ENCODE measurements at regions of chr9 and their contacts with region 1.

Region 1: DNA sequence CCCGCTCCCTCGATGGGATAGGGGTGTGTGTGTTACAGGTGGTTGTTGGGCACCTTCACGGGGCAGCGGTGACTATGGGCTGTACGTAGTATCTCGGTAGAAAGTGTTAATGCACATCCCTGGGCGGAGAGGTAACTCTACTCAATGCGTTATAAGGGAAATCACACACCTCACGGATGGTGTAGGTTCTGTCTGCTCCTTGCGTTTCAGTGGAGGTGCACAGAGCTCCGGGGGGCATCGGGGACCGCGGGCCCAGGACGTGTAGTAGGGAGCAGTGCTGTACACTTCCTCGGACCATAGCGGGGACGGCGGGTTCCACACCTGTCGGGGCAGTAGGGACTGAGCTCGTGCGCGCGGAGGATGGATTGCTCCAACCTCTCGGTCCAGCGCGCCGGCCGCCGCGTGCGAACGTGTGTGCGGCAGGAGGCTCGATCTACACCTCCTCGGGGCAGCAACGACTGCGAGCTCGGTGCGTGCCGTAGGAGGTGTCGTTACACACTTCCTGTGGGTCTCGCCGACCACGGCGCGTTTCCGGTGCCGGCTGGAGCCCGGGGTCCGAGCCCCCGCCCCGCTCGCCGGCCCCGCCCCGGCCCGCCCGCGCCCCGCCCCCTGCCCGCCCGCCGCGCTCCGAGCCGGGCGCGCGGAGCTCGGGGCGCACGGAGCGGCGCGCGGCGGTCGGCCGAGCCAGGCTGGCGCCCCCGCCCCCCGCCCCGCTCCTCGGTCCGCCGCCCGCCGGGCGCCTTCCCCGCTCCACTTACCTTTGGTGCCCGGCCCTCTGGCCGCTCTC is at the start of gene KIAA1958:
- DNase-seq: peak; percentile 94
- ATAC-seq: peak; percentile 96
- H3K4me3 Mint-ChIP-seq: peak within 1 kb of the TSS; percentile 95
- H3K27ac Mint-ChIP-seq: peak within 1 kb of the TSS; percentile 95
- H3K4me1 Mint-ChIP-seq: peaks cover 37% of the 10 kb centered on the region
- H3K27me3 Mint-ChIP-seq: no peaks in the 10 kb centered on the region
- total RNA-seq, gene KIAA1958: 9.7 to 13.0 TPM

Region 2: GRCh38 chr9:111631071-111631971 is 855.1 kb before region 1 on chr9 and contains the start of gene DNAJC25:
- CTCF ChIA-PET with region 1: no interaction called
- POLR2A ChIA-PET with region 1: no interaction called
- intact Hi-C with region 1: loop called in 1 of 2 experiments (anchors 5 kb)
- DNase-seq: peak; percentile 98
- ATAC-seq: peak; percentile 98
- H3K4me3 Mint-ChIP-seq: peak within 1 kb of the TSS; percentile 94
- H3K27ac Mint-ChIP-seq: peak within 1 kb of the TSS; percentile 91
- H3K4me1 Mint-ChIP-seq: peaks cover 47% of the 10 kb centered on the region
- H3K27me3 Mint-ChIP-seq: no peaks in the 10 kb centered on the region
- total RNA-seq, gene DNAJC25: 6.3 to 7.5 TPM

Region 3: GRCh38 chr9:112174218-112174964 is 312.0 kb before region 1 on chr9:
- CTCF ChIA-PET with region 1: no interaction called
- POLR2A ChIA-PET with region 1: interaction called, 3 read pairs
- intact Hi-C with region 1: loop called in 1 of 2 experiments (anchors 5 kb)
- DNase-seq: peak; percentile 87
- ATAC-seq: peak; percentile 87
- H3K4me3 Mint-ChIP-seq: peak overlapping the region; percentile 75
- H3K27ac Mint-ChIP-seq: peak overlapping the region; percentile 92
- H3K4me1 Mint-ChIP-seq: peaks cover 38% of the 10 kb centered on the region
- H3K27me3 Mint-ChIP-seq: peaks cover 11% of the 10 kb centered on the region

Region 4: GRCh38 chr9:112717661-112718341 is 231.4 kb after region 1 on chr9 and contains the start of gene INIP:
- CTCF ChIA-PET with region 1: interaction called, 3 read pairs
- POLR2A ChIA-PET with region 1: interaction called, 4 read pairs
- intact Hi-C with region 1: loop called (anchors 1 kb)
- DNase-seq: peak; percentile 99
- ATAC-seq: peak; percentile 93
- H3K4me3 Mint-ChIP-seq: peak within 1 kb of the TSS; percentile 89
- H3K27ac Mint-ChIP-seq: peak within 1 kb of the TSS; percentile 97
- H3K4me1 Mint-ChIP-seq: peaks cover 35% of the 10 kb centered on the region
- H3K27me3 Mint-ChIP-seq: no peaks in the 10 kb centered on the region
- total RNA-seq, gene INIP: 37.3 to 37.7 TPM

Region 5: DNA sequence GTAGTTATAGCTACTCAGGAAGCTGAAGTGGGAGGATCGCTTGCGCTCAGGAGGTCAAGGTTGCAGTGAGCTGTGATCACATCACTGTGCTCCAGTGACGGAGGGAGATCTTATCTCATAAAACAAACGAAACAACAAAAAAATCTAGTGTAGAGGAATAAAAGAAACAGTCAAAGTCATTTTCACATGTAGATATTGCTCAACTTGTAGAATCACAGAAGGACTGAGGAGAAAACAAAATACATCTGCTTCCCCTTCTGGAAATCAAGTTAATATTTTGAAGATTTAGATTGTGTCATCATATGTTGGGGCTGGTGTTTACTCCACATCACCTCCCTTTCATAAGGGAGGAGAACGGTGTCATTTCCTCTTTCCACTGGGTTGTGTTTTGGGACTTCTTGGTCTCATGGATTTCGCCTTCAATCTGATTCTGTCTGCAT is 412.5 kb after region 1 on chr9:
- CTCF ChIA-PET with region 1: no interaction called
- POLR2A ChIA-PET with region 1: no interaction called
- intact Hi-C with region 1: loop called in 1 of 2 experiments (anchors 1 kb)
- DNase-seq: no peak
- ATAC-seq: no peak
- H3K4me3 Mint-ChIP-seq: no peak overlapping the region
- H3K27ac Mint-ChIP-seq: no peak overlapping the region
- H3K4me1 Mint-ChIP-seq: peaks cover 5% of the 10 kb centered on the region
- H3K27me3 Mint-ChIP-seq: peaks cover 32% of the 10 kb centered on the region

Region 6: GRCh38 chr9:113221003-113221799 is 734.8 kb after region 1 on chr9 and contains the starts of genes FKBP15 and SLC31A1:
- CTCF ChIA-PET with region 1: no interaction called
- POLR2A ChIA-PET with region 1: no interaction called
- intact Hi-C with region 1: loop called in 1 of 2 experiments (anchors 2 kb)
- DNase-seq: peak; percentile 98
- ATAC-seq: peak; percentile 97
- H3K4me3 Mint-ChIP-seq: peak within 1 kb of the TSS; percentile 89
- H3K27ac Mint-ChIP-seq: peak within 1 kb of the TSS; percentile 93
- H3K4me1 Mint-ChIP-seq: peaks cover 46% of the 10 kb centered on the region
- H3K27me3 Mint-ChIP-seq: no peaks in the 10 kb centered on the region
- total RNA-seq, gene FKBP15: 34.0 to 44.2 TPM
- total RNA-seq, gene SLC31A1: 14.8 to 18.2 TPM